ENCODE measurements at regions of chr9 and their contacts with region 1.

Region 1: GRCh38 chr9:19456996-19457692 is 48.3 kb downstream of the ACER2 start:
- DNase-seq: peak; percentile 80
- ATAC-seq: peak; percentile 96

Region 2: DNA sequence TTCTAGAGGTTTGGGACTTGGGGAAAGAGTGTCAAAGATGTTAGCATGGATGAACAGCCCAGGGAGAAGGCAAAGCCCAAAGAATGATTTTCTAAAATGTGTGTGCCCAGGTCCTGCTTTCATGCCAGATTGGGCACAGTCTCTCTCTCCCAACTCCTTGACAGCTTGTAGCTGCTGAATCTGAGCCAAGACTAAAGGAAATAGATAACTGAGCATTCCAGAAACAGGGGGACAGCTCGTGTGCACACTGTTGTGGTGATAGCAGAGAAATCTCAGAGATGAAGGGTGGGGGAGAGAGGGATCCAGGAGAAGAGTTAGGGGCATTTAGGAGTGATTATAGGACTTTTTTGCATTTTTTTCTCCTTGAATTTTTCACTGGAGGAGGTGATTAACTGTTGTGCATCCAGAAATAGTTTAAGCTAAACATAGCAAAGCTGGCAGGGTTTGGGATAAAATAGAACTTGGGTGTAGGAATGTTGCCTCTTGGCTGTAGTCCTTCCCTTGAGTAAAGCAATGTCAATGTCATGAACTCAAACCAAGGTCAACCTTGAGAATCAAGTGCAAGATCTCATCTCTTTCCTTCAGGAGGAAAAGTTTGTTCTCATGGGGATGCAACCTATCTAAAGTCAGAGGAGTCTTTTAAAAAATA is 1632.4 kb before region 1 on chr9:
- intact Hi-C with region 1: loop called (anchors 5 kb)
- DNase-seq: no peak
- ATAC-seq: no peak

Region 3: GRCh38 chr9:20593551-20593950 is 1136.4 kb after region 1 on chr9:
- intact Hi-C with region 1: no loop called
- DNase-seq: no peak
- ATAC-seq: no peak

Measured in sciatic nerve (tissue), 2 donors.